ENCODE measurements at regions of chr17 and their contacts with region 1.

Region 1: DNA sequence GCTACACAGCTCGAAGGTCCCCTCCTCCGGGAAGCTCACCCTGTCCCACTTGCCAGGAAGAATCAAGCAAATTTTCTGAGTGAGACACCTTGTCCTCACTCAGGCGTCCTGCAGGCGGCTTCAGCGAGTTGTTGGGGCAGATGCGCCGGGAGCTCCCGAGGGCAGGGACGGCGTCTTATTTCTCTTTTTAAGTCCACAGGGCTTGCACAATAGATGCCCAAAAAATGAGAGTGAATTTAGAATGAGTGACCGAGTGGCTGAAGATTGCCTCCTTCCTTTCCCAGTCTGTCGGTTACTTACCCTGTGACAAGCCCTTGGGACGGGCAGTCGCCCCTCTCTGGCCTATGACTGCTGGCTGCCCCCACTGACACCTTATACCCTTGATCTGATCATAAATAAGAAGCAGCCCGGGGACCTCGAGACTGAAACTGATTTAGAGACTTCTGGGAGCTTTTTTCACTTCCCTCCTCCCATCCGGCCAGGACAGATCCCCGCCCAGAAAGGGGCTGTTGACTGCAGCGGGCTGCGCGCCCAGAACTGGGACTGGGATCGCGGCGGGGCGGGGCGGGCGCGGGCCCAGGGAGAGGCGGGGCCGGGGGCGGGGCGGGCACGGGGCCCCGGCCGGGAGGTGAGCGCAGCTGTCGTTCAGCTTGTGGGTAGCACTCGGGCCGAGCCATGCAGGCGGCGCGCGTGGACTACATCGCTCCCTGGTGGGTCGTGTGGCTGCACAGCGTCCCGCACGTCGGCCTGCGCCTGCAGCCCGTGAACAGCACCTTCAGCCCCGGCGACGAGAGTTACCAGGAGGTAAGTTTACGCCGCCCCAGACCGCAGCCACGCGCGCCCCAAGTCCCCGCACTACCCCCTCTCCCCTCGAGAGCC is at the start of gene TTYH2:
- DNase-seq: peak; percentile 90 to 95 (median 93)
- H3K4me3 ChIP-seq: peak within 1 kb of the TSS; percentile 3 to 64 (median 34)
- H3K27ac ChIP-seq: peak within 1 kb of the TSS; percentile 62 to 89 (median 85)
- H3K4me1 ChIP-seq: peaks cover 23 to 35% of the 10 kb centered on the region in 2 donors
- H3K27me3 ChIP-seq: no peaks in the 10 kb centered on the region
- CTCF ChIP-seq: peak in 4 of 6 experiments; percentile 42 to 49 (median 46)
- POLR2A ChIP-seq: peak in 1 of 2 donors; percentile 91
- total RNA-seq, gene TTYH2: 3.7 to 24.0 (median 9.7) TPM

Region 2: DNA sequence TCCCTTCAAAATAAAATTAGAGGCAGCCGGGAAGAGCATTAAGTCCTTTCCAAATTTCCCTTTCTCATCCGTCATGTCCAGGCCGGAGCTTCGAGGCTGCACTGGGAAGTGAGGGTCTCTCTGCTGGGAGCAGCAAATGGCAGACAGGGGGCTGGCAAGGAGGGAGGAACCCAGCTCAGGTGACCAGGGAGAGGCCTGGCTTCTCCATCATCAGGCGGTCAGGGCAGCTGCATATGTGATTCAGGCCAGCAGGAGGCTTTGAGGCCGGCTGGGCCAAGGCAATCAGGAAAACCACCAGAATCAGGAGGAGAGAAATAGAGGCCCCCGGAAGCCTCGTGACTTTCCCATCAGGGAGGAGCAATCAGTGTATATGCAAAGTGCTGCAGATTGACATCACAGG is 94.6 kb before region 1 on chr17:
- intact Hi-C with region 1: no loop called
- DNase-seq: peak in 1 of 7 donors; percentile 55
- H3K4me3 ChIP-seq: no peak overlapping the region
- H3K27ac ChIP-seq: no peak overlapping the region
- H3K4me1 ChIP-seq: no peaks in the 10 kb centered on the region
- H3K27me3 ChIP-seq: no peaks in the 10 kb centered on the region
- CTCF ChIP-seq: peak in 2 of 6 experiments; percentile 11 to 13
- POLR2A ChIP-seq: no peak

Region 3: DNA sequence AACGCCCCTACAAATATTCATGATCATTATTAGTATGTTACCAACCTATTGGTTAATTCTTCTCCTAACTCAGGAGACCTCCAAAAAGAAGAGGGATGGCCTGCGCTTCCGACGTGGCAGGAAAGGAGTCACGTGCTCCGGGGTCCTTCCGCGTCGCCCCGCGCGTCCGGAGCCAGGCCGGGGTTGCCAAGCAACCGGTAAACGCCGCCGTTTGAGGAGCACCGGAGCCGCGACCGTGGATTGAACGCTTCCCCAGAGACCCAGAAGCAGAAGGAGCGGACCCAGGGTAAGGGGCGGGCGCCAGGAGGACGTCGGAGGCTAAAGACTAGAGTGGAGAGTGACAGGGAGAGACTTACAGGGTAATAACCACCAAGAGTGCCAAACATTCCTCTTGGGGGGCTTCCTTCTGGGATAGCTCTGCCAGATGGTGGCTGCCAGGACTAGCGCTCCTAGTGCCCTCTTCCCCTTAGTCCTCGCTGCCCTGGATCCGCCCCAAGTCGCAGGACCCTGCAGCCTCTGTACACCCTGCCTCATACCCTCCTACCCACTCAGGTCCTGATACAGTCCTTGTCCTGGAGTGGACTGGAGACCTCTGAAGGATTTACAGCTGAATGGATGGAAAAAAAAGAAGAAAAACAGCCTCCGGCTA is 61.0 kb after region 1 on chr17 and contains the start of gene DNAI2:
- intact Hi-C with region 1: loop called in 1 of 2 experiments (anchors 10 kb)
- DNase-seq: peak in 1 of 7 donors; percentile 58
- H3K4me3 ChIP-seq: peak within 1 kb of the TSS in 1 of 4 donors; percentile 11
- H3K27ac ChIP-seq: no peak within 1 kb of the TSS
- H3K4me1 ChIP-seq: peaks cover 0 to 9% of the 10 kb centered on the region in 2 donors
- H3K27me3 ChIP-seq: peaks cover 15% of the 10 kb centered on the region
- CTCF ChIP-seq: no peak
- POLR2A ChIP-seq: no peak
- total RNA-seq, gene DNAI2: 0.06 to 0.14 TPM in 2 of 9 donors, not detected in the others

Region 4: GRCh38 chr17:74296548-74296936 is 83.4 kb after region 1 on chr17:
- intact Hi-C with region 1: loop called in 1 of 2 experiments (anchors 5 kb)
- DNase-seq: peak; percentile 68 to 94 (median 86)
- H3K4me3 ChIP-seq: no peak overlapping the region
- H3K27ac ChIP-seq: peak overlapping the region in 4 of 5 donors; percentile 20 to 84 (median 79)
- H3K4me1 ChIP-seq: peaks cover 4 to 24% of the 10 kb centered on the region in 2 donors
- H3K27me3 ChIP-seq: no peaks in the 10 kb centered on the region
- CTCF ChIP-seq: peak; percentile 54 to 86 (median 78)
- POLR2A ChIP-seq: peak in 1 of 2 donors; percentile 29

Region 5: DNA sequence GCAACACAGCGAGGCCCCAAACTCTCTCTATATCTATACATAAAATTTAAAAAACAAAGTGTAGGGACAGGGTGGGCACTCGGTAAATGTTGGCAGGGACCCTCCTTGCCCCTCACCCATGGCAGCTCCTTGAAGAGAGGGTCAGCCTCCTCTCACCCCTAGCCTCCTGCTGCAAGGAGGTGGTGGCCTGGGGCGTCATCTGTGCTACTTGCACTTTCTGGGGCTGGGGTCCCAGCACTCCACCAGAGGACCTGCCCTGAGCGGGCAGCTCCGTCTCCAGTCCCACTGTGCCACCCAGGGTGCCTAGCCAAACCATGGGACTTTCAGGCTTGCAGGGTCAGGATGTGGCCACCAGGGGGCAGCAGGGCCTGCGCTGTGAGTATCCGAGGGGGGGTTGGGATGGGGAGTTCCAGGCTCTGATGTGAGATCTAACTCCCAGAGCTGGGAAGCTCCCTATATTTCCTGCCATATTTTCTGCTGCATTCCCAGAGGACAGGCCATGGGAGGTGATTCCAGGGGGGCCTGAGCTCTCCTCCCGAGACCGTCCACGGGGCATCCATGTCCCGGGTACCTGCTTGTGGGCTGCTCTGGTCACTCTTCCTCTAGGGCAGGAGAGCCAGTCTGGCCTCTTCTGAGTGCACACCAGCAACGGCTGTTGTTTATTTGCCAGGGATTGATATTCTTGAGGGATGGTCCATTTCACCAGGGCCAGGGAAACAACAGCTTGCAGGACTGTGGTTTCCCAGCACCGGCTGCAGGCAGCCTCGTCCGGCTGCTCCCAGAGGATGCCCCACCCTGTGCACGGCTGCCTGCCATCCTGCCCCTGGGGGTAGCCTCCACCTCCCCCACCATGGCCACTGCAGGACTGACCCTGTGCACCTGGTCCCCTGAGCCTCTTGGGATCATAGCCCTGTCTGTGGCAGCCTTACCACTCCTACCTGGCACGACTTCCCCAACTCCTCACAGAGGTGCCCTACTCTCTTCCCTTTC is 155.2 kb after region 1 on chr17:
- intact Hi-C with region 1: loop called in 1 of 2 experiments (anchors 10 kb)
- DNase-seq: peak; percentile 72 to 87 (median 76)
- H3K4me3 ChIP-seq: no peak overlapping the region
- H3K27ac ChIP-seq: no peak overlapping the region
- H3K4me1 ChIP-seq: no peaks in the 10 kb centered on the region
- H3K27me3 ChIP-seq: no peaks in the 10 kb centered on the region
- CTCF ChIP-seq: peak; percentile 78 to 97 (median 88)
- POLR2A ChIP-seq: no peak

Region 6: GRCh38 chr17:74566132-74566753 is 353.1 kb after region 1 on chr17:
- intact Hi-C with region 1: no loop called
- DNase-seq: peak in 6 of 7 donors; percentile 28 to 58 (median 37)
- H3K4me3 ChIP-seq: no peak overlapping the region
- H3K27ac ChIP-seq: no peak overlapping the region
- H3K4me1 ChIP-seq: peaks cover 0 to 3% of the 10 kb centered on the region in 2 donors
- H3K27me3 ChIP-seq: no peaks in the 10 kb centered on the region
- CTCF ChIP-seq: peak; percentile 21 to 47 (median 35)
- POLR2A ChIP-seq: no peak